ENCODE measurements at regions of chr6 and their contacts with region 1.

Region 1: GRCh38 chr6:67433124-67433523 is 1202.0 kb upstream of the ADGRB3 start:
- DNase-seq: peak in 3 of 9 donors; percentile 0 to 3 (median 1)
- ATAC-seq: no peak
- H3K4me3 ChIP-seq: no peak overlapping the region
- H3K4me3 Mint-ChIP-seq: no peak overlapping the region
- H3K27ac ChIP-seq: no peak overlapping the region
- H3K27ac Mint-ChIP-seq: no peak overlapping the region
- H3K4me1 ChIP-seq: no peaks in the 10 kb centered on the region
- H3K4me1 Mint-ChIP-seq: no peaks in the 10 kb centered on the region
- H3K27me3 ChIP-seq: no peaks in the 10 kb centered on the region
- H3K27me3 Mint-ChIP-seq: no peaks in the 10 kb centered on the region

Region 2: GRCh38 chr6:67802771-67803170 is 369.6 kb after region 1 on chr6:
- CTCF ChIA-PET with region 1: no interaction called
- POLR2A ChIA-PET with region 1: no interaction called
- intact Hi-C with region 1: loop called in 1 of 2 experiments (anchors 5 kb)
- DNase-seq: peak in 1 of 9 donors; percentile 6
- ATAC-seq: no peak
- H3K4me3 ChIP-seq: no peak overlapping the region
- H3K4me3 Mint-ChIP-seq: no peak overlapping the region
- H3K27ac ChIP-seq: no peak overlapping the region
- H3K27ac Mint-ChIP-seq: no peak overlapping the region
- H3K4me1 ChIP-seq: no peaks in the 10 kb centered on the region
- H3K4me1 Mint-ChIP-seq: no peaks in the 10 kb centered on the region
- H3K27me3 ChIP-seq: no peaks in the 10 kb centered on the region
- H3K27me3 Mint-ChIP-seq: no peaks in the 10 kb centered on the region